Colonic mucosa (tissue), 4 donors: ENCODE measurements at regions of chrX and their contacts with region 1.

Region 1: GRCh38 chrX:103214870-103215424 is at the start of gene BEX4:
- DNase-seq: peak; percentile 83
- H3K4me3 ChIP-seq: peak within 1 kb of the TSS; percentile 66
- H3K27ac ChIP-seq: peak within 1 kb of the TSS; percentile 63
- H3K4me1 ChIP-seq: no peaks in the 10 kb centered on the region
- H3K27me3 ChIP-seq: no peaks in the 10 kb centered on the region
- CTCF ChIP-seq: no peak
- total RNA-seq, gene BEX4: 7.6 to 16.4 TPM

Region 2: GRCh38 chrX:103254921-103255493 is 40.1 kb after region 1 on chrX and contains the start of gene TCEAL8:
- intact Hi-C with region 1: loop called (anchors 5 kb)
- DNase-seq: peak; percentile 80
- H3K4me3 ChIP-seq: peak within 1 kb of the TSS; percentile 36
- H3K27ac ChIP-seq: peak within 1 kb of the TSS; percentile 60
- H3K4me1 ChIP-seq: no peaks in the 10 kb centered on the region
- H3K27me3 ChIP-seq: no peaks in the 10 kb centered on the region
- CTCF ChIP-seq: no peak
- total RNA-seq, gene TCEAL8: 39.0 to 44.4 TPM

Region 3: GRCh38 chrX:103378990-103379389 is 164.0 kb after region 1 on chrX:
- intact Hi-C with region 1: no loop called
- DNase-seq: no peak
- H3K4me3 ChIP-seq: no peak overlapping the region
- H3K27ac ChIP-seq: no peak overlapping the region
- H3K4me1 ChIP-seq: no peaks in the 10 kb centered on the region
- H3K27me3 ChIP-seq: no peaks in the 10 kb centered on the region
- CTCF ChIP-seq: no peak